Posterior vena cava (tissue), 2 donors: ENCODE measurements at regions of chr4 and their contacts with region 1.

Region 1: DNA sequence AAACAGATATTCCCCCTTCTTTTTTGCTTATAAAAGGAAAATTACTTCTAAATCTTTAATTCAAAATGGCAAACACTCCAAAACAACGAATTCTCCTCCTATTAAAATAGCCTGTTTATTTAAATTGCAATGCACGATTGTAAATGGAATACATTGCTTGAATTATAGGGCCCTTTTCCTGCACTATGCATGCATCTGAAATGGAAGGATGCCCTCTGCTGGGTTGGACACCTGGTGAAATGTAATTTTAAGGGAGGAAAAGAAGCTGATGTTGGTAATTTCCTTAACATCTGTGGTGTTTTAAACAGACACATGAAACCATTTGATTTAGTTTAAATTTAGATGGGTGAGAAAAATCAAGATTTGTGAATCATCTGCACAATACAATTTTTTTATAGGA is 72.8 kb downstream of the GRXCR1 start:
- DNase-seq: no peak

Region 2: GRCh38 chr4:41990365-41991111 is 974.8 kb before region 1 on chr4 and contains the start of gene SLC30A9:
- intact Hi-C with region 1: no loop called
- DNase-seq: peak; percentile 98
- total RNA-seq, gene SLC30A9: 42.1 to 47.4 TPM

Region 3: DNA sequence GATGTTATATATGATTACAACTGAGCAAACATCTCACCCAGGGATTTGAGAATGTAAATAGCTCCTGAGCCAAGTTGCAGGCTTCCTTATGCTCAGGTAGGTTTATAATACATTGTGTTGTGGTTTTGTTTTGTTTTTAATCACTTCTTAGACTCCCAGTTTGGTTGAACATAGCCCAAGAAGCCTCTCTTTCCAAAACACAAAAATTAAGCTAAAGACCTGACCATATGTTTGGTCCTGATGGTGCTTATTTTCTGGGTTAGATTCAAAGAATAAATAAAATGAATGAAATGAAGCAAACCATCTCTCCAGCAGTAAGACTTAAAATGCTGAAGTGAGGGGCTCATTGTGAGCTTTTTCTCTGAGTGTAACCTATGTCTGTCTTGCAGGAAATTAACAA is 20.6 kb after region 1 on chr4:
- intact Hi-C with region 1: loop called in 1 of 2 experiments (anchors 2 kb)
- DNase-seq: no peak